Activated T-helper 1 cell treated with anti-CD3 and anti-CD28 coated beads, Interleukin-12 subunit alpha, Interleukin-12 subunit beta, Interleukin-2, Interleukin-4 antibody, amounts not matched to agents 30 ng/mL and 10 ng/mL and 1 ng/mL, durations not matched to agents 14 hours and 24 hours and 36 hours (primary cell): ENCODE measurements at regions of chr2 and their contacts with region 1.

Region 1: DNA sequence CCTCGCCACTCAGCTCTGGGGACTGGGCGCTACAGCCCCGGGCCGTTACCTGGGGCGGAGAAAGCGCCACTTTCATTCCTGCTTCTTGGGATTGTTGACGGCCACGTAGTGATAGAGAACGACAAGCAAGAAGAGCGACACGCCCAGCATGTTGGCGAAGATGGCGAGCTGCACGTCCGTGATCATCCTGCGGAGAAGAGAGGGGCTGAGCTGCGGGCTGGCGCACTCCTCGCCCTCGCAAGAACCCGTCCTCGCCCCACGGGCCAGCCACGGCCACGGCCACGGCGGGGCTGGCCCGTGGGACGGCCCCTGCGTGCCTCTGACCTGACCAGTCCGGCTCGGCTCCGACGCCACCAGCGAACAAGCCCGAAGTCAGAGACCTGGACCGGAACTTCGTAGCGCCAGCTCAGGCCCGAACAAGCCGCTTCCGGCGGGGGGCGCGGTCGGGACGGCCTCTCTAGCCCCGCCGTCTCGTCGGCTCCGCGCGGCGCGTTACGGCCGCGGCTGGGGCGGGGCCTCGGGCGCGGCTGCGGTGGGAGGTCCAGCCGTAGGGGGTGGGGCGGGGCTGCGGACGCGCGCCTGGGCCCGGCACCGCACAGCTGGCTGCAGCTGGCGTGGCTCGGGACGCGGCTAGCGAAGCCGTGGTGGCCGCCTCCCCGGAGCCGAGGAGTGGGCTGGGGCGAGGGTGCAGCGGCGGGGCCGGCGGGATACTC is at the start of gene OST4:
- DNase-seq: peak; percentile 91
- H3K4me3 Mint-ChIP-seq: peak within 1 kb of the TSS; percentile 99
- H3K27ac Mint-ChIP-seq: peak within 1 kb of the TSS; percentile 98
- H3K4me1 Mint-ChIP-seq: peaks cover 84% of the 10 kb centered on the region
- H3K27me3 Mint-ChIP-seq: peaks cover 2% of the 10 kb centered on the region
- total RNA-seq, gene OST4: 322 and 332 TPM in 2 replicates

Region 2: DNA sequence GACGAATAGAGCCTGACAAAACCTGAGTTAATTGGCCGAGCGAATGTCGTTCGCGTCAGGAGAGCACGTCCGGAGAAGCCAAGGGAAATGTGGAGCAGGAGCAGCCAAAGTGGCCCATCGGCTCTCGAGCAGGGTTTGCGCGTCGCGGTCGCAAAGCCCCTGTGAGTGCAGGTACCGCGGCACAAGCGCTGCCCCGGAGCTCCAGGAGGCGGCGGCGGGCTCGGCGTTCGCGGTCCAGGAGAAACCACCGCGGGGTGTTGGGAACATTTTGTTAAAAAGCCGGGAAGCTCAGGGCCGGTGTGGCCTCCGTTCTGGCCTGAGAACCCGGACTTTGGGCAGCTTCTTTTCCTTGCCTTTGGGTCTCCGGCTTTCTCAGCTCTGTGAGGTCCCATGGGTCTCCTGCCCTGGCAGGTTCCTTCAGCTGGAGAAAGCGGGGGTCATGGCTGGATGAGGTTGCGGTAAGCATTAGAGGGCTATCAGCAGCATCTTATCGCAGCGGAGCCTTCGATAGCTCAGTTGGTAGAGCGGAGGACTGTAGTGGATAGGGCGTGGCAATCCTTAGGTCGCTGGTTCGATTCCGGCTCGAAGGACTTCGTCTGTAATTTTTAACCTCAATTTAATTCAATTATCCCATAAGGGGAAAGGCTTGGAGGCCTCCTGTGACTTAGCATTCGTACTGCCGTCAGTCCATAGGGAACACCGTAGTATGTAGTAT is 21.0 kb before region 1 on chr2:
- intact Hi-C with region 1: loop called (anchors 1 kb)
- DNase-seq: peak; percentile 88
- H3K4me3 Mint-ChIP-seq: peak overlapping the region; percentile 96
- H3K27ac Mint-ChIP-seq: peak overlapping the region; percentile 99
- H3K4me1 Mint-ChIP-seq: peaks cover 36% of the 10 kb centered on the region
- H3K27me3 Mint-ChIP-seq: peaks cover 7% of the 10 kb centered on the region

Region 3: GRCh38 chr2:27092696-27093429 is 21.4 kb after region 1 on chr2:
- intact Hi-C with region 1: no loop called
- DNase-seq: no peak
- H3K4me3 Mint-ChIP-seq: no peak overlapping the region
- H3K27ac Mint-ChIP-seq: no peak overlapping the region
- H3K4me1 Mint-ChIP-seq: peaks cover 21% of the 10 kb centered on the region
- H3K27me3 Mint-ChIP-seq: no peaks in the 10 kb centered on the region

Region 4: DNA sequence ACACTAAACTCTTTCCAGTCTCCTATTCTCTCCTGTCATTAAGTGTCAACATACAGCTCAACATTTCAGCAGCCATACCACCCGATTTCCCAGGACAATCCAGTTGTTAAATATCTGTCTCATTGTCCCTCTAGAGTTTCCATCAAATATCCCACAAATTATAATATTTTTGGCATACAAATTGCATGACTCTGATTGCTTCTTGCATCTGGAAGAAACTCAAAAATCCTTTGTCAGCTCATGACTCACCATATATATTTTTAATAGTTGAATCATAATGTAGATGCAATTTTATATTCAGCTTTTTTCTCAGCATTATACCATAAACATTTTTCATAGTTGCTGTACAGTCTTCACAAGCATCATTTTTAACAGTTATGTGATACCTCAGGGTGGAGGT is 184.2 kb after region 1 on chr2:
- intact Hi-C with region 1: no loop called
- DNase-seq: no peak
- H3K4me3 Mint-ChIP-seq: no peak overlapping the region
- H3K27ac Mint-ChIP-seq: no peak overlapping the region
- H3K4me1 Mint-ChIP-seq: no peaks in the 10 kb centered on the region
- H3K27me3 Mint-ChIP-seq: peaks cover 24% of the 10 kb centered on the region